ENCODE measurements at regions of chr12 and their contacts with region 1.

Region 1: GRCh38 chr12:34121360-34121759 is 99.1 kb downstream of the ALG10 start:
- DNase-seq: no peak
- ATAC-seq: no peak
- H3K4me3 ChIP-seq: no peak overlapping the region
- H3K27ac ChIP-seq: no peak overlapping the region
- H3K4me1 ChIP-seq: no peaks in the 10 kb centered on the region
- H3K27me3 ChIP-seq: no peaks in the 10 kb centered on the region

Region 2: DNA sequence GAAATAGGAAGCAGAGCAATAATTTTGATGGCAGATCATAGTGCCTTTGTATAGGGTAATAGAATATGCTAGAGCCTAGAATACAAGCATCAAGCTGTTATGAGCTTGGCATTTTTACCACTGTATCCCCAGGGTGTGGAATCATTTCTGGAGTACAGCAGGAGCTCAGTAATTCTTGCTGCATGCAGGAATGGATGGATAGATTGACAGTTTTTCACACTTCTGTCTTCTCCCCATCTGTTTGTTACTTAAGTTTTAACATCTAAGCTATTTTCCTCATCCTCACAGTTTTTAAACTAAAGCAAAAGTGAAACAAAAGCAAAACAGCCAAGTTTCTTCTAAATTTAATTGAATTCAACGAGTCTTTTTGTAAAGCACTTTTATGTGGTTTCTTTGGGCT is 66.4 kb before region 1 on chr12:
- intact Hi-C with region 1: no loop called
- DNase-seq: no peak
- ATAC-seq: no peak
- H3K4me3 ChIP-seq: no peak overlapping the region
- H3K27ac ChIP-seq: no peak overlapping the region
- H3K4me1 ChIP-seq: no peaks in the 10 kb centered on the region
- H3K27me3 ChIP-seq: no peaks in the 10 kb centered on the region

Region 3: DNA sequence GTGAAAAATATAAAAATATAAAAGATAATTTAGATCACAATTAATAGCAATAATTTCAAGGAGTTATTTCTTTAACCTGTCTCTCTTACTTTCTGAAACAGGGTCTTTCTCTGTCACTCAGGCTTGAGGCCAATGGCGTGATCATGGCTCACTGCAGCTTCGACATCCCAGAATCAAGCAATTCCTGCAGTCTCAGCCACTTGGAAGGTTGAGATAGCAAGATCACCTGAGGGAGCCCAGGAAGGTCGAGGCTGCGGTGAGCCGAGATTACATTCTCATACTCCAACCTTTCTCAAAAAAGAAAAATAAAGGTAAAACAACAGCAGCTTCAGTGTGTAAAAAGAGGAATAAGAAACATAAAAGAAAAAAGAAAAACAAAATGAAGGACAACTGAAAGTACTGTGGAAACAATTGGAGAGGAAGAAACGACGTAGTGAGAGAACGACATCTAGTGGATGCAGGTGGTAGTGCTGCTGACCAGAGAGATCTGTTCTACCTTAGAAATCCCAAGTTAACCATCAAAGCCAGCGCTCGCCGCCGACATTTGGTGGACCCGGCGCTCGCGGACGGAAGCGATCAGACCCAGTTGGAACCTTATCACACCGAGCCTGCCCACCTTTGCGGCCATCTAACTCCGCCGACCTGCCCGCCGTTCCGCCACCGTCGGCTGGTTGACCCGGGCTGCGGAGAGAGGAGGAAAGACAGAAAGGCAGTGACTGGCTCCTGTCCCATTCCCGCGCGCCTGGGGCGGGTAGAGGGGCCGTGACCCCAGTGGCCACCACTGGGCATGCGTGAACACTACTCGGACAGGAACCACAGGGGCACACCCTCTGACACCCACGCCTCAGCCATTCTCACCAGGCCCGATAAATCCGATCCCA is 97.0 kb after region 1 on chr12:
- intact Hi-C with region 1: loop called in 1 of 2 experiments (anchors 5 kb)
- DNase-seq: peak; percentile 71 to 81
- ATAC-seq: peak; percentile 75
- H3K4me3 ChIP-seq: peak overlapping the region; percentile 0 to 31
- H3K27ac ChIP-seq: no peak overlapping the region
- H3K4me1 ChIP-seq: no peaks in the 10 kb centered on the region
- H3K27me3 ChIP-seq: no peaks in the 10 kb centered on the region

Measured in aorta (tissue), 5 donors.